CD4-positive, alpha-beta T cell (primary cell): ENCODE measurements at regions of chr17 and their contacts with region 1.

Region 1: GRCh38 chr17:57009737-57010445 is 32.0 kb downstream of the SCPEP1 start:
- DNase-seq: peak; percentile 12 to 71 (median 37)
- ATAC-seq: peak; percentile 98
- H3K4me3 ChIP-seq: no peak overlapping the region
- H3K4me3 Mint-ChIP-seq: peak overlapping the region; percentile 1
- H3K27ac ChIP-seq: no peak overlapping the region
- H3K27ac Mint-ChIP-seq: no peak overlapping the region
- H3K4me1 ChIP-seq: peaks cover 7% of the 10 kb centered on the region
- H3K4me1 Mint-ChIP-seq: peaks cover 5% of the 10 kb centered on the region
- H3K27me3 ChIP-seq: no peaks in the 10 kb centered on the region
- H3K27me3 Mint-ChIP-seq: no peaks in the 10 kb centered on the region
- CTCF ChIP-seq: peak; percentile 75

Region 2: DNA sequence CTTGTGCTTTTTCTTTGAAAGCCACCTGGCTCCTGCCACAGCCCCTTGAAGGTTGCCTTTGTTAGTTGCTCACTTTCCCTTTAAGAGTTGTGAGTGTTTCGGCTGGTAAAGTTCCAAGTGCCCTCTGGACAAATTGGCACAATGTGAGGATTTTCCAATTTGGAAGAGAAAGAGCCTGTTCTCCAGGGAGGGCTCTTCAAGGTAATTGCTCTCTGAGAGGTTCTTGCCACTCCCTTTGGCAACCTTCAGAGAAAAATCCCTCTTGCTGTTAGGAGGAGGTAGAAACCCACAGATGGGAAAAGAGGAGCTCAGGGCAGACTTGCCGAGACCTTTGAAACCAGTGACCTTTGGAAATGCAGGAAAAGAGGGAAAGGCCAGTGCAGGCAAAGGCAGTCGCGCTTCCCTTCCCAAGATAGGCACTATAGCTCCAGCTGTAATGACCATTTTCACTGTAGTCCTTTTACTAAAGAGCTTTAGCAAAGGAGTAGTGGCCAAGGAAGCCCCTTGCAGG is 26.1 kb after region 1 on chr17:
- CTCF ChIA-PET with region 1: no interaction called
- POLR2A ChIA-PET with region 1: no interaction called
- intact Hi-C with region 1: loop called in 1 of 2 experiments (anchors 1 kb)
- DNase-seq: no peak
- ATAC-seq: no peak
- H3K4me3 ChIP-seq: no peak overlapping the region
- H3K4me3 Mint-ChIP-seq: no peak overlapping the region
- H3K27ac ChIP-seq: no peak overlapping the region
- H3K27ac Mint-ChIP-seq: no peak overlapping the region
- H3K4me1 ChIP-seq: no peaks in the 10 kb centered on the region
- H3K4me1 Mint-ChIP-seq: no peaks in the 10 kb centered on the region
- H3K27me3 ChIP-seq: peaks cover 8 to 12% of the 10 kb centered on the region in 2 experiments
- H3K27me3 Mint-ChIP-seq: peaks cover 47% of the 10 kb centered on the region
- CTCF ChIP-seq: no peak

Region 3: DNA sequence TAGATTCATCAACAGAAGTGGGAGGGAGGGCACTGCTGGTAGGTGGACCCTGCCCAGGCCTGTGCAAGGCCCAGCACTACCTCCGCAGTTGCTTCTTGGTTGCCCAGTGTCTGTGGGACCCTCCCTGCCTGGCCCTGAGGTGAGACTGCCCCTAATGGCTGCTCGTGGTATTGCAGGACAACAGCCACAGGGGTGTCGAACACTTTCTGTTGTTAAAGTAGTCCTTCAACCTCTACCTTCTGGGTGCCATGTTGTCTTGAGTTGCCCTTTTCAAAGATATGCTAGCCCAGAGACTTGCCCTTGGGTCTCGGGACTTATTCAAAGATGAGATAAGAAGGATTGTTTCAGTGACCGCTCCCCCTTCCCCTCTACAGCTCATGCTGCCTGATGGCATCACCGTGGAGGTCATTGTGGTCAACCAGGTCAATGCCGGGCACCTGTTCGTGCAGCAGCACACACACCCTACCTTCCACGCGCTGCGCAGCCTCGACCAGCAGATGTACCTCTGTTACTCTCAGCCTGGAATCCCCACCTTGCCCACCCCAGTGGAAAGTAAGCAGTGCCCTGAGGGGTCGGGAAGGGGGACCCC is 104.3 kb after region 1 on chr17:
- CTCF ChIA-PET with region 1: no interaction called
- POLR2A ChIA-PET with region 1: no interaction called
- intact Hi-C with region 1: loop called in 1 of 2 experiments (anchors 5 kb)
- DNase-seq: peak; percentile 49 to 77 (median 63)
- ATAC-seq: peak; percentile 76
- H3K4me3 ChIP-seq: no peak overlapping the region
- H3K4me3 Mint-ChIP-seq: no peak overlapping the region
- H3K27ac ChIP-seq: no peak overlapping the region
- H3K27ac Mint-ChIP-seq: no peak overlapping the region
- H3K4me1 ChIP-seq: no peaks in the 10 kb centered on the region
- H3K4me1 Mint-ChIP-seq: no peaks in the 10 kb centered on the region
- H3K27me3 ChIP-seq: no peaks in the 10 kb centered on the region
- H3K27me3 Mint-ChIP-seq: no peaks in the 10 kb centered on the region
- CTCF ChIP-seq: peak; percentile 88